ENCODE measurements at regions of chr10 and their contacts with region 1.

Region 1: GRCh38 chr10:19775296-19775695 is 40.9 kb upstream of the PLXDC2 start:
- DNase-seq: peak; percentile 69 to 88 (median 81)
- H3K4me3 ChIP-seq: peak overlapping the region in 1 of 3 experiments; percentile 40
- H3K4me3 Mint-ChIP-seq: peak overlapping the region in 1 of 2 donors; percentile 75
- H3K27ac ChIP-seq: peak overlapping the region; percentile 29 to 79
- H3K27ac Mint-ChIP-seq: peak overlapping the region; percentile 86 to 94 (median 91)
- H3K4me1 ChIP-seq: peaks cover 36 to 39% of the 10 kb centered on the region in 2 donors
- H3K4me1 Mint-ChIP-seq: peaks cover 30% of the 10 kb centered on the region
- H3K27me3 ChIP-seq: no peaks in the 10 kb centered on the region
- H3K27me3 Mint-ChIP-seq: peaks cover 0 to 2% (median 0%) of the 10 kb centered on the region in 3 donors
- CTCF ChIP-seq: no peak

Region 2: GRCh38 chr10:19819419-19820033 is 44.2 kb after region 1 on chr10:
- intact Hi-C with region 1: loop called in 1 of 2 experiments (anchors 5 kb)
- DNase-seq: peak; percentile 76 to 95 (median 81)
- H3K4me3 ChIP-seq: peak overlapping the region; percentile 83 to 93 (median 90)
- H3K4me3 Mint-ChIP-seq: peak overlapping the region; percentile 99
- H3K27ac ChIP-seq: peak overlapping the region in 1 of 2 donors; percentile 93
- H3K27ac Mint-ChIP-seq: peak overlapping the region in 6 of 7 donors; percentile 60 to 98 (median 96)
- H3K4me1 ChIP-seq: peaks cover 27 to 51% of the 10 kb centered on the region in 2 donors
- H3K4me1 Mint-ChIP-seq: peaks cover 52% of the 10 kb centered on the region
- H3K27me3 ChIP-seq: no peaks in the 10 kb centered on the region
- H3K27me3 Mint-ChIP-seq: peaks cover 3 to 7% (median 5%) of the 10 kb centered on the region in 3 donors
- CTCF ChIP-seq: peak; percentile 82

Region 3: GRCh38 chr10:21372651-21373410 is 1597.5 kb after region 1 on chr10:
- intact Hi-C with region 1: no loop called
- DNase-seq: peak; percentile 30 to 51 (median 33)
- H3K4me3 ChIP-seq: peak overlapping the region in 1 of 3 experiments; percentile 52
- H3K4me3 Mint-ChIP-seq: peak overlapping the region in 1 of 2 donors; percentile 41
- H3K27ac ChIP-seq: peak overlapping the region; percentile 64 to 78
- H3K27ac Mint-ChIP-seq: peak overlapping the region; percentile 59 to 89 (median 75)
- H3K4me1 ChIP-seq: peaks cover 17 to 22% of the 10 kb centered on the region in 2 donors
- H3K4me1 Mint-ChIP-seq: peaks cover 24% of the 10 kb centered on the region
- H3K27me3 ChIP-seq: no peaks in the 10 kb centered on the region
- H3K27me3 Mint-ChIP-seq: peaks cover 0 to 4% (median 4%) of the 10 kb centered on the region in 3 donors
- CTCF ChIP-seq: no peak